Activated T-helper 1 cell treated with anti-CD3 and anti-CD28 coated beads, Interleukin-12 subunit alpha, Interleukin-12 subunit beta, Interleukin-2, Interleukin-4 antibody, amounts not matched to agents 30 ng/mL and 10 ng/mL and 1 ng/mL, durations not matched to agents 14 hours and 24 hours and 36 hours (primary cell): ENCODE measurements at regions of chr16 and their contacts with region 1.

Region 1: GRCh38 chr16:28140788-28141618 is 70.8 kb downstream of the XPO6 start:
- DNase-seq: peak; percentile 76
- H3K4me3 Mint-ChIP-seq: peak overlapping the region; percentile 71
- H3K27ac Mint-ChIP-seq: peak overlapping the region; percentile 90
- H3K4me1 Mint-ChIP-seq: peaks cover 79% of the 10 kb centered on the region
- H3K27me3 Mint-ChIP-seq: no peaks in the 10 kb centered on the region

Region 2: DNA sequence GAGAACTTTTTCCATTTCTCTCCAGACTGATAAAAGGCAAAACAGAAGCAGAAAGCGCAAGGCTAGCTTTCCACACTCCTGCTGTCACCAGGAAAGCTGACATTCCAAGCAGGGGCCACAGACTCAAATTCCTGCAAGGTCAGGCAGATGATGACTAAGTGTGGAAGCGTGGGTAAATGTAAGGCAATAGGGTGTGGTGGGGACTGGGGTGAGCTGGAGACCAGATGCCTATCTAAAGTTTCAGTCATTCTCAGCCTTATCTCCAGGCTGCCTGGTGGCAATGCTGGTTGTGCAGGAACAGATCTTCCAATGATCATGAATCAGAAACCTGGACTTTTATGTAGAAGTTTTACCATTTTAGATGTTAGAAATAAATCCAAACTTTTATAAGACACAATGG is 301.6 kb before region 1 on chr16:
- intact Hi-C with region 1: no loop called
- DNase-seq: no peak
- H3K4me3 Mint-ChIP-seq: no peak overlapping the region
- H3K27ac Mint-ChIP-seq: no peak overlapping the region
- H3K4me1 Mint-ChIP-seq: no peaks in the 10 kb centered on the region
- H3K27me3 Mint-ChIP-seq: peaks cover 13% of the 10 kb centered on the region

Region 3: GRCh38 chr16:28112883-28113282 is 28.1 kb before region 1 on chr16:
- intact Hi-C with region 1: loop called (anchors 2 kb)
- DNase-seq: no peak
- H3K4me3 Mint-ChIP-seq: no peak overlapping the region
- H3K27ac Mint-ChIP-seq: peak overlapping the region; percentile 77
- H3K4me1 Mint-ChIP-seq: peaks cover 28% of the 10 kb centered on the region
- H3K27me3 Mint-ChIP-seq: no peaks in the 10 kb centered on the region

Region 4: DNA sequence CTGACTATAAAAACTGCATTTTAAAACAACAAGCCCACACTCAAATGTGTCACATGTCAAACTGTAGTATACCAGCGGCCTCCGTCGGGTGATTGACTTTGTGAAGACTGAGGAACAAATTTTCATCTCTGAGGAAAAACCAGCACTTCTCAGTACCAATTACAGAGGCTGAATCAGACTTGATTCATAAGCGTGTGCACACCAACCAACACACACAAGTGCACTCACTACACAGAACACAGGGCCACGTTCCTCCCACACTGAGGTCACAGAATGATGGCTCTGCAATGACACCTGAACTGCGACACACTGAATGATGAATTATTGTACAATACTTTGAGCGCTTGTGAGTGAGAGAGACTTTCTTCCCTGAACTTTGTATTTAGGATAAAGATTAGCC is 41.2 kb after region 1 on chr16:
- intact Hi-C with region 1: loop called (anchors 1 kb)
- DNase-seq: no peak
- H3K4me3 Mint-ChIP-seq: peak overlapping the region; percentile 75
- H3K27ac Mint-ChIP-seq: peak overlapping the region; percentile 93
- H3K4me1 Mint-ChIP-seq: peaks cover 80% of the 10 kb centered on the region
- H3K27me3 Mint-ChIP-seq: no peaks in the 10 kb centered on the region

Region 5: DNA sequence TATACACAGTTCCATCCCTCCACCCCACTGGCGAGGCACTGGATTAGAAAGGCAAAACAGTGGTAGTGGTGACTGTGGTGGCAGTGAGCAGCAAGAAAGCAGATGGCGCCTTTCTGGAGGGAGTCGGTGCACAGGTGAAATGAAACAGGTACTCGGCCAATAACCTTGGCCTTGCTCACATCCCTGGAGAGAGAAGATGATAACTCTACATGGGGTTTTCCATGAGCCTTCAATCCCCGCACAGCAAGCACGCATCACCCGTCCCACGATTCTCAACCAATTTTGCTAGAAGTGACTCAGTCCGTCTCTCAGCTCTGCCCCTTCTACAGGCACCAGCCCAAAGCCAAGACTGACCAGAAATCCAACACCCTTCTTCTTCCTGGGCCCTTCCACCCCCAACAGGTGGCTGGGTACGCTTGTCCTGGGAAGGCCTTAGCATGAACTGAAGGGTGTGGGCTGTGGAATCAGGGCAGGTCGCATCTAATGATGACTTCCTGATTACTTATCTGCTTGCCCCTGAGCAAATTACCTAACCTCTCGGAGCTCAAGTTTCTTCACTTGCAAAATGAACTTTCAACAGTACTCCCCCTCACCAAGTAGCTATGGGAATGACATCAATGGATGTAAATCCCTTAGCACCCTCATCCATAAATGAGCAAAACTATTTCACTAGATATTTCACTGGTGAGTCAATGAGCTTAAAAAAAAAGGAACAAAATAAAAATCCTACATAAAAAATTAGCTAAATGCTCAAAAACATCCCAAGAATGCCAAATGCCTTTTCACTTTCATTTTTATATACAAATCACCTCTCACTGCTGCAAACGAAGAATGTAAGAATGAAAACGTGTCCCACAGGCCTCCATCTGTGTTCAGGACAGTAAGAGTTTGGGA is 52.8 kb after region 1 on chr16:
- intact Hi-C with region 1: loop called (anchors 1 kb)
- DNase-seq: peak; percentile 35
- H3K4me3 Mint-ChIP-seq: peak overlapping the region; percentile 77
- H3K27ac Mint-ChIP-seq: peak overlapping the region; percentile 86
- H3K4me1 Mint-ChIP-seq: peaks cover 78% of the 10 kb centered on the region
- H3K27me3 Mint-ChIP-seq: no peaks in the 10 kb centered on the region

Region 6: DNA sequence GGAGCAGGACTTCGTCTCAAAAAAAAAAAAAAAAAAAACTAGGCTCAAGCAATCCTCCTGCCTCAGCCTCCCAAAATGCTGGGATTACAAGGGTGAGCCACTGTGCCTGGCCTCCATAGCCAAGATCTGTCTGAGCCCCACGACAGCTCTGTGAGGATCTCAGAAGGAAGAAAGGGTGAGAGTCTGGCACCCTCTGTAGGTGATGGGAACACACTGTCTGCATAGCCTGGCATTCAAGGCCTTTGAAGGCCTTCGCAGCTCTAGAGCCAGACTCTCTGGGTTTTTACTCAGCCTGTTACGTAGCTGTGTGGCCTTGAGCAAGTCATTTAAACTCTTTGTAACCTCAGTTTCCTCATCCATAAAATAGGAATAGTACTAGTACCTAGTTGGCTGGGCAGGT is 77.1 kb after region 1 on chr16:
- intact Hi-C with region 1: loop called (anchors 1 kb)
- DNase-seq: peak; percentile 51
- H3K4me3 Mint-ChIP-seq: no peak overlapping the region
- H3K27ac Mint-ChIP-seq: no peak overlapping the region
- H3K4me1 Mint-ChIP-seq: no peaks in the 10 kb centered on the region
- H3K27me3 Mint-ChIP-seq: peaks cover 3% of the 10 kb centered on the region

Region 7: DNA sequence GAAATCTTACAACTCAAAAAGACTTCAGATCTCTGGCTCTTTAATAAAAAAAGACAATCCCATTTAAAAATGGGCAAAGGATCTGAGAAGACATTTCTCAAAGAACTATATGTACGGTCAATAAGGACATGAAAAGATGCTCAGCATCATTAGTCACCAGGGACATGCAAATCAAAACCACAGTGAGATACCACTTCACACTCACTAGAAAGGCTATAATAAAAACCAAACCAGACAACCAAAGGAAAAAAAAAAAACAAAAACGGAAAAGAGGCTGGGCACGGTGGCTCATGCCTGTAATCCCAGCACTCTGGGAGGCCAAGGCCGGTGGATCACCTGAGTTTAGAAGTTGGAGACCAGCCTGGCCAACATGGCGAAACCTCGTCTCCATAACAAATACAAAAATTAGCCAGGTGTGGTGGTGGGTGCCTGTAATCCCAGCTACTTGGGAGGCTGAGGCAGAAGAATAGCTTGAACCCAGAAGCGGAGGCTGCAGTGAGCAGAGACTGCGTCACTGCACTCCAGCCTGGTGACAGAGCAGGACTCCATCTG is 332.8 kb after region 1 on chr16:
- intact Hi-C with region 1: no loop called
- DNase-seq: no peak
- H3K4me3 Mint-ChIP-seq: no peak overlapping the region
- H3K27ac Mint-ChIP-seq: peak overlapping the region; percentile 59
- H3K4me1 Mint-ChIP-seq: peaks cover 12% of the 10 kb centered on the region
- H3K27me3 Mint-ChIP-seq: no peaks in the 10 kb centered on the region

Region 8: GRCh38 chr16:28491970-28492474 is 351.0 kb after region 1 on chr16 and contains the start of gene CLN3:
- intact Hi-C with region 1: loop called (anchors 10 kb)
- DNase-seq: peak; percentile 84
- H3K4me3 Mint-ChIP-seq: peak within 1 kb of the TSS; percentile 89
- H3K27ac Mint-ChIP-seq: peak within 1 kb of the TSS; percentile 100
- H3K4me1 Mint-ChIP-seq: peaks cover 62% of the 10 kb centered on the region
- H3K27me3 Mint-ChIP-seq: no peaks in the 10 kb centered on the region
- total RNA-seq, gene CLN3: 27.1 and 28.5 TPM in 2 replicates

Region 9: DNA sequence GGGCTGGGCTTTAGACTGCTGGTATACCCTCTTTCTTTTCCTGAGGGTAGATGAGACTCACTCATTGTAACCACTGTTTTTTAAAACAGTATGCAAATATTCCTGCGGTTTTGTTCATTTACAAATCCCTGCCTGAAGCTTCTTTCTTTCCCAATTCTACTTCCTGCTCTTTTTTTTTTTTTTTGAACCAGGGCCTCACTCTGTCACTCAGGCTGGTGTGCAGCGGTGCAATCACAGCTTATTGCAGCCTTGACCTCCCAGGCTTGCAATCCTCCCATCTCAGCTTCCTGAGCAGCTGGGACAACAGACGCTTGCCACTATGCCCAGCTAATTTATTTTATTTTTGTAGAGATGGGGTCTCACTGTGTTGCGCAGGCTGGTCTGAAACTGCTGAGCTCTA is 476.9 kb after region 1 on chr16:
- intact Hi-C with region 1: no loop called
- DNase-seq: no peak
- H3K4me3 Mint-ChIP-seq: no peak overlapping the region
- H3K27ac Mint-ChIP-seq: no peak overlapping the region
- H3K4me1 Mint-ChIP-seq: peaks cover 9% of the 10 kb centered on the region
- H3K27me3 Mint-ChIP-seq: no peaks in the 10 kb centered on the region